ENCODE measurements at regions of chr5 and their contacts with region 1.

Region 1: GRCh38 chr5:123423278-123424149 is at the start of gene CEP120:
- DNase-seq: peak; percentile 89
- ATAC-seq: peak; percentile 95
- H3K4me3 Mint-ChIP-seq: no peak within 1 kb of the TSS
- H3K27ac Mint-ChIP-seq: no peak within 1 kb of the TSS
- H3K4me1 Mint-ChIP-seq: peaks cover 11% of the 10 kb centered on the region
- H3K27me3 Mint-ChIP-seq: no peaks in the 10 kb centered on the region
- CTCF ChIP-seq: no peak
- total RNA-seq, gene CEP120: 39.2 and 43.1 TPM in 2 replicates

Region 2: DNA sequence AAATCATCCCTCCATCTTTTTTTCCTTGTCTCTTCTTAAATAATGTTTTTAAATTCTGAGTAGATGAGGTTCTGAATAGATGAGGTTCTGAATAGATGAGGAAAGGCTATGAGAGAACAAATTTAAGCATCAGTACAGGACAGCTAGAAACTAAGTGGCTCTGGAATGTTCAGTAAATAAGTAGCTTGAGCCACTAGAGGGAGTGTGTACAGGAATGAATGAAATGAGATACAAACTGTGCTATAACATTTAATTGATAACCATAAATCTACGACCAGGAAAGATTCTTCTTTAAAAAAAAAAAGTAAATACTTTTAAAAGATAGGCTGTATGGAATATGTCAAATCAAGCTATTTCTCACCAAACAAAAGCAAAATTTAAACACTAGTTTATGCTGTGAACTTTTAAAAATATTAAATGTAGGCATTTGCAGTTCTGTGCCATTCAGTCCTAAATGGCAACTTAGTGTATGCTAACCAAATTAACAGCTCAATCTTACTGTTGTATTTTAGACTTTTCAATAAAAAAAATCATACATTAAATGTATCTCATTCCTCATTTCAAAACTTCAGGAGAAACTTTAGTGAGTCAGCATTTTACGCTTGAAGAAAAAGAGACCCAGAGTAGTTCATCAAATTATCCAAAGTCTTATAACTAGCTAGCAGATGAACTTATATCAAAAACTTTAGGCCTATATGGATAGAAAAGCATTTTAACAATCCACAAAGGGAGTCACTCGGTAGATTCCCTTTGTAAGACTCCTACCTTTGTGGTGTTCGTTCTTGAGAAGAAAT is 719.1 kb before region 1 on chr5:
- CTCF ChIA-PET with region 1: no interaction called
- POLR2A ChIA-PET with region 1: interaction called, 4 read pairs
- intact Hi-C with region 1: loop called (anchors 1 kb)
- DNase-seq: no peak
- ATAC-seq: no peak
- H3K4me3 Mint-ChIP-seq: peak overlapping the region; percentile 7
- H3K27ac Mint-ChIP-seq: peak overlapping the region; percentile 94
- H3K4me1 Mint-ChIP-seq: peaks cover 63% of the 10 kb centered on the region
- H3K27me3 Mint-ChIP-seq: no peaks in the 10 kb centered on the region
- CTCF ChIP-seq: no peak

Region 3: DNA sequence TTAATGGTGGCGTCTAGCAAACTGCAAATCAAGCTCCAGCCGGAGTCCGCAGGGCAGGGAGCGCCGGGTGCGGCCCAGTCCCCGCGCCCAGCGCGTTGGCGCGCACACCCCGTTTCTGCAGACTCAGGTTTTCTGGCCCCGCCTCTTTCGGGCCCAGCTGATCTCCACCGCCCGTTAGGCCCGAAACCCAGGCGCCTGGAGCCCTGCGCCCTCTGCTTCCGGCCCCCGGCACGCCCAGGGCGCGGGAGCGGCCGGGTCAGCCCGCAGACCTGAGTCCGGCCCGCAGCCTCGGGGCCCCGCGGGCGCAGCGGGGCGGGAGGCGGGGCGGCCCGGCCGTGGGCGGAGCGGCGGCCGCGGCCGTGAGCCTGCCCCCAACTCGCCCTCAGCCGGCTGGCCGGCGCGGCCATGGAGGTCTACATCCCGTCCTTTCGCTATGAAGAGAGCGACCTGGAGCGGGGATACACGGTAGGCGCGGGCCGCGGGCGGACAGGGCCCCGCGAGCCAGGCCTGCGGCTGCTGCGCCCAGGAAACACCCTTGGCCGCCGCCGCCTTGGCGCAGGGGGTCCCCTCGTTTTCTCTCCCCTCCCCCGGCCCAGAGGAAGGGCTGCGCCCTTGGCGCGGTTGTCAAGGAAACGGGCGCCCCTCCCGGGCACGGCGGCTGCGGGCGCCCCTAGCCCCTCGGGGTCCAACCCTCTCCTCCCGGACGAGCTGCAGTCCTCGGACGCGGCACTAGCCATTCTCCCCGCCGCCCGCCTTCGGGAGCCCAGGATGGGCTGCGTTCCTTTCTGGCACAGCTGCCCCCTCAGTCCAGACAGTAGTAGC is 578.1 kb before region 1 on chr5 and contains the start of gene SNX24:
- CTCF ChIA-PET with region 1: no interaction called
- POLR2A ChIA-PET with region 1: interaction called, 3 read pairs
- intact Hi-C with region 1: loop called (anchors 5 kb)
- DNase-seq: peak; percentile 72
- ATAC-seq: peak; percentile 82
- H3K4me3 Mint-ChIP-seq: peak within 1 kb of the TSS; percentile 90
- H3K27ac Mint-ChIP-seq: peak within 1 kb of the TSS; percentile 82
- H3K4me1 Mint-ChIP-seq: peaks cover 36% of the 10 kb centered on the region
- H3K27me3 Mint-ChIP-seq: no peaks in the 10 kb centered on the region
- CTCF ChIP-seq: no peak
- total RNA-seq, gene SNX24: 8.2 and 8.5 TPM in 2 replicates

Region 4: DNA sequence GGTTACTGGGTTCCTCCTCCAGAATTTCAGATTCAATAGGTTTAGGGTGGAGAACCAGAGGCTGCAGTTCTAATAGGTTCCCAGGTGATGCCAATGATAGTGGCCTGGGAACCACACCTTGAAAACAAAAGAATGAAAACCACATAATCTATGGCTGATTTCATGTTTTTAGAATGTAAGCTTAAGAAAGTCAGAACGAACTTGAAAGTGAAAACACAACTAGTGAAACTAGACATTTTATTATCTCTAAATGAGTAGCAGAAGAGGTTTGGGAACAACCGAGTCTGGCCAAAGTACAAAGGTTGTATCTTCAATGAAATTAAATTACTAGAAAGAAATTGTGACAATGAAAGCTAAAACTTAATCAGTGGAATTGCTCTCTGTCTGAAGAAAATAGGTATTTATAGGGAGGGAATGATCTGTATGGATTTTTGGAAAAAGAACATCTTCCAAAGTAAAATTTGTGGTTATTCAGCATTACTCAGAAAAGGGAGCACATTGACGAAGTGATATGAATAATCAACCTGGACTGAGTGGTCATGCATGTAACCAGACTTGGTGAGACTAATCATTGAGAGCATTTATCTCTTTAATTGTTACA is 24.6 kb after region 1 on chr5:
- CTCF ChIA-PET with region 1: interaction called, 5 read pairs
- POLR2A ChIA-PET with region 1: interaction called, 6 read pairs
- intact Hi-C with region 1: loop called (anchors 2 kb)
- DNase-seq: no peak
- ATAC-seq: peak; percentile 47
- H3K4me3 Mint-ChIP-seq: no peak overlapping the region
- H3K27ac Mint-ChIP-seq: peak overlapping the region; percentile 38
- H3K4me1 Mint-ChIP-seq: peaks cover 15% of the 10 kb centered on the region
- H3K27me3 Mint-ChIP-seq: no peaks in the 10 kb centered on the region
- CTCF ChIP-seq: no peak

Region 5: DNA sequence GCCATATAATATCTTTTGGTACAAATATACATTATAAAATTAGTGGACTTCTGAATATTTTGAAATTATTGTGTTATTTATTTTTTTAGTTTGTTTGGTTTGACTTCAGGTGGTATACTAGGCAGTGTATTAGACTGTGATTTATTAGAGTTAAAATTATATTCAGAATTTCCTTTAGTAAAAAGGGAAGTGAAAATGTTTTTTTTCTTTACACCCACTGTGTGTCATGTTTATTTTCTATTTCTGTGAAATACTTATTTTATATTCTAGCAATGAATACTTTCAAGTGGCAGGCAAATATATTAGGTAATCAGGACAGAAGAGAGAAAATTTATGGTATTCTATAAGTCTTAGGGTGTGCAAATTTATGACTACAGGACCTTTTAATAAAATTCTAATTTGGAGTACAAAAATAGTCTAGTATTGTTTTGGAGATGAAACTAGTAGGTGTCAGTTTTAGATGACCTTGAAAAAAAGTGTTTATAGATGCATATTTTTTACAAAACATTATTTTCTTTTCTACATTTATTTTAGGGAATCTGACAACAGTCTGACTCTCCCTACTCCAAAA is 97.2 kb after region 1 on chr5:
- CTCF ChIA-PET with region 1: no interaction called
- POLR2A ChIA-PET with region 1: interaction called, 24 read pairs
- intact Hi-C with region 1: no loop called
- DNase-seq: no peak
- ATAC-seq: peak; percentile 55
- H3K4me3 Mint-ChIP-seq: peak overlapping the region; percentile 53
- H3K27ac Mint-ChIP-seq: peak overlapping the region; percentile 61
- H3K4me1 Mint-ChIP-seq: peaks cover 90% of the 10 kb centered on the region
- H3K27me3 Mint-ChIP-seq: no peaks in the 10 kb centered on the region
- CTCF ChIP-seq: no peak

Region 6: DNA sequence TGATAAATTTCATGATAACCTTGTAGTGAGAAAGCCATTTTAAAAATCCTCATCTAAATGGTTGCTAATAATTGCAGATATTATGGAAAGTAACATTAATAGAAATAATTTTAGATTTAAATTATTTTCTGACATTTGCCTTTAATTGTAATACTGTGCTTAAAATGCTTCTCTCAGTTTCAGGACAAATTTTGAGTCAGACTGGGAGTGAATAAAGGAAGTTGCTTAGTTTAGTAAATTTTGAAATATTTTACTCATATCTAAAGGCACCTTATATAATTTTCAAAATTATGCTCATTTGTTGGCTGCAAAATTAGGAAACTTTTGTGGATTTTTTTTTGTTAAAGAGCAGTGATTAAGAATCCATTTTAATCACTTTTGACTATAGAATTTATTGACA is 182.3 kb after region 1 on chr5:
- CTCF ChIA-PET with region 1: interaction called, 43 read pairs
- POLR2A ChIA-PET with region 1: interaction called, 30 read pairs
- intact Hi-C with region 1: loop called (anchors 1 kb)
- DNase-seq: no peak
- ATAC-seq: no peak
- H3K4me3 Mint-ChIP-seq: no peak overlapping the region
- H3K27ac Mint-ChIP-seq: peak overlapping the region; percentile 20
- H3K4me1 Mint-ChIP-seq: peaks cover 5% of the 10 kb centered on the region
- H3K27me3 Mint-ChIP-seq: no peaks in the 10 kb centered on the region
- CTCF ChIP-seq: no peak